A673 (cell line): ENCODE measurements at regions of chrX and their contacts with region 1.

Region 1: DNA sequence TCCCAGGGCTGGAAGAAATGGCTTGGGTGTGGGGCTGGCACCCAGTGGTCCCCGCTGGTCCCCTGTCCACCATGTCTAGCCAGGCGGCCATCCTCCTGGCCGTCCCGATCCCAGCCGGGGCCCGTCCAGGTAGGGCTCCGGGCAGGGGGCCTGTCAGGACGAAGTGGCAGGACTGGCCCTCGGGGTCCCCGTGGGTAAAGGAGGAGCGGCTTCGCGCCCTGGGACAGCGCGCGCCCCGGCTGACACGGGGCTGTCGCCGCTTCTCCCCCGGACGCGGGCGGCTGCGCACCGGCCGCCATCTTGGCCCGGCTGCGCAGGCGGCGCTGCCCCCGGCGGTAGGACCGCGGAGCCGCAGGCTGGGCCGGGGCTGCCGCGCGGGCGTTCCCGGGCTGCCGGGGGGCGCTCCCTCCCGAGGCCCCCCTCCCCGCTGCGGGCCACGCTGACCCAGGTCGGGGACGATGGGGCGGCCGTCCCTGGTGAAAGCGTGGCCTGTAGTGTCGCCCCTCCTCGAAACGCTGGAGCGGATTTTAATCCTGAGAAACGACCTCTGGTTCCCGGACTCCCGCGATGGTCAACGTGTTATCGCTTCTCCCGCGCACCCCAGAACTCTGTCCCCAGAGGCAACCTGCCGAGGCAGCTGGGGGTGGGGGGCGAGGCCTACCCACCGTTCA is 60.4 kb upstream of the BCOR start:
- DNase-seq: peak; percentile 56
- H3K4me3 ChIP-seq: peak overlapping the region; percentile 49
- H3K27ac ChIP-seq: peak overlapping the region; percentile 78
- H3K4me1 ChIP-seq: peaks cover 5% of the 10 kb centered on the region
- H3K27me3 ChIP-seq: no peaks in the 10 kb centered on the region
- CTCF ChIP-seq: no peak; the same call in 1 of the 2 replicates

Region 2: GRCh38 chrX:38618180-38618579 is 1540.0 kb before region 1 on chrX:
- CTCF ChIA-PET with region 1: no interaction called
- POLR2A ChIA-PET with region 1: interaction called, 14 read pairs
- intact Hi-C with region 1: no loop called
- DNase-seq: no peak
- H3K4me3 ChIP-seq: no peak overlapping the region
- H3K27ac ChIP-seq: no peak overlapping the region
- H3K4me1 ChIP-seq: no peaks in the 10 kb centered on the region
- H3K27me3 ChIP-seq: peaks cover 14% of the 10 kb centered on the region
- CTCF ChIP-seq: no peak

Region 3: GRCh38 chrX:40031911-40032310 is 126.3 kb before region 1 on chrX:
- CTCF ChIA-PET with region 1: no interaction called
- POLR2A ChIA-PET with region 1: no interaction called
- intact Hi-C with region 1: no loop called
- DNase-seq: no peak
- H3K4me3 ChIP-seq: no peak overlapping the region
- H3K27ac ChIP-seq: no peak overlapping the region
- H3K4me1 ChIP-seq: no peaks in the 10 kb centered on the region
- H3K27me3 ChIP-seq: no peaks in the 10 kb centered on the region
- CTCF ChIP-seq: no peak

Region 4: GRCh38 chrX:40663880-40664633 is 505.9 kb after region 1 on chrX:
- CTCF ChIA-PET with region 1: no interaction called
- POLR2A ChIA-PET with region 1: no interaction called
- intact Hi-C with region 1: no loop called
- DNase-seq: no peak
- H3K4me3 ChIP-seq: no peak overlapping the region
- H3K27ac ChIP-seq: no peak overlapping the region
- H3K4me1 ChIP-seq: no peaks in the 10 kb centered on the region
- H3K27me3 ChIP-seq: no peaks in the 10 kb centered on the region
- CTCF ChIP-seq: 0 out of 2 replicates have a peak, but pooled peaks have one; percentile 10